PC-3 (cell line): ENCODE measurements at regions of chr6 and their contacts with region 1.

Region 1: GRCh38 chr6:144013486-144013909 is 5.4 kb upstream of the PLAGL1 start:
- DNase-seq: peak; percentile 90
- ATAC-seq: peak; percentile 59
- H3K4me3 ChIP-seq: no peak overlapping the region
- H3K27ac ChIP-seq: no peak overlapping the region
- H3K4me1 ChIP-seq: 0 out of 2 replicates have a peak, but pooled peaks cover 10% of the 10 kb centered on the region
- H3K27me3 ChIP-seq: no peaks in the 10 kb centered on the region
- CTCF ChIP-seq: peak; percentile 83

Region 2: DNA sequence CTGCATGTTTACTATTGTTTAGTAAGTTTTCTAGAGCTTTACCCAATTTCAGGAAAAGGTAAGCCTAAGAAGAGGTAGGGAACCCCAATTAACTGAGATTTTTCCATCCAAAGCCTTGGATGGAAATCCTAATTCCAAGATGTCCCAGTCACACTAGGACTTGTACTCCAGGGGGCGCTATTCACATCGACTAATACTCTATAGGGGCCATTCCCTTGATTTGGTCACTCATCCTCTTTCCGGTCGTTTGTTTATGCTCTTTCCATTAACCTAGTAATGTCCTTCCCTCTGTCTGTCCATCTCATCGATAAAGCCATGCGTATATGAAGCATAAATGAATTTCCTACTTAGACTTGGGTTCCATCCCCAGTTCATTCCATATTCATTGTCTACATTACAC is 421.2 kb before region 1 on chr6:
- CTCF ChIA-PET with region 1: no interaction called
- POLR2A ChIA-PET with region 1: no interaction called
- intact Hi-C with region 1: no loop called
- DNase-seq: peak; percentile 39
- ATAC-seq: no peak
- H3K4me3 ChIP-seq: no peak overlapping the region
- H3K27ac ChIP-seq: no peak overlapping the region
- H3K4me1 ChIP-seq: no peaks in the 10 kb centered on the region
- H3K27me3 ChIP-seq: no peaks in the 10 kb centered on the region
- CTCF ChIP-seq: peak; percentile 61

Region 3: DNA sequence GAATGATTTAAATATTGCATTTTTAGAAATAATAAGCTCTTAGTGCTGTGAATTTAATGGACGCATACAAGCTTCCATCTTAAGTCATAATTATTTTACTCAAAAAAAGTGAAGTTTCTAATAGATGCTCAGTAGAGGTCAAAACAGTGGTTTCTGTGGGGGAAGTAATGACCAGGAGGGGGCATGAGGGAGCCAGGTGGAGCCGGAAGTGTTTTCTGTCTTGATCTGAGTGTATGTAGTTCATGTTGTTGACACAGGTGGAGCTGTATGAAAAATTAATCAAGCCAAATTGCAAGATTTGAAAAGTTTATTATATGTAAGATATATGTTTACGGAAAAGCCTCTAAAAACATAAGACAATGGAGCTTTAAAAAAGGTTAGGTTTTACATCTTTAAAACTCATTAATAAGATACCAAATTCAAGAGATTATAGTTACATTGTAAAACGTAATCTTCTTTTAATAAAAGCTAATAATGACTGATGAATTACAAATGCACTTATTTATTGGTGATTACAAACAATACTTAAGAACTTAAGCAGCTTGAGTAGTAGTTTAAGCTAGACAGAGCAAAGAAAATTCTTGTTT is 73.4 kb before region 1 on chr6:
- CTCF ChIA-PET with region 1: interaction called, 12 read pairs
- POLR2A ChIA-PET with region 1: no interaction called
- intact Hi-C with region 1: loop called (anchors 1 kb)
- DNase-seq: peak; percentile 66
- ATAC-seq: peak; percentile 70
- H3K4me3 ChIP-seq: no peak overlapping the region
- H3K27ac ChIP-seq: no peak overlapping the region
- H3K4me1 ChIP-seq: no peaks in the 10 kb centered on the region
- H3K27me3 ChIP-seq: no peaks in the 10 kb centered on the region
- CTCF ChIP-seq: peak; percentile 89

Region 4: GRCh38 chr6:144055121-144055931 is 41.8 kb after region 1 on chr6:
- CTCF ChIA-PET with region 1: no interaction called
- POLR2A ChIA-PET with region 1: no interaction called
- intact Hi-C with region 1: no loop called
- DNase-seq: no peak
- ATAC-seq: no peak
- H3K4me3 ChIP-seq: no peak overlapping the region
- H3K27ac ChIP-seq: no peak overlapping the region
- H3K4me1 ChIP-seq: no peaks in the 10 kb centered on the region
- H3K27me3 ChIP-seq: no peaks in the 10 kb centered on the region
- CTCF ChIP-seq: no peak